Activated CD4-positive, alpha-beta T cell treated with anti-CD3 and anti-CD28 coated beads for 36 hours (primary cell): ENCODE measurements at regions of chr18 and their contacts with region 1.

Region 1: DNA sequence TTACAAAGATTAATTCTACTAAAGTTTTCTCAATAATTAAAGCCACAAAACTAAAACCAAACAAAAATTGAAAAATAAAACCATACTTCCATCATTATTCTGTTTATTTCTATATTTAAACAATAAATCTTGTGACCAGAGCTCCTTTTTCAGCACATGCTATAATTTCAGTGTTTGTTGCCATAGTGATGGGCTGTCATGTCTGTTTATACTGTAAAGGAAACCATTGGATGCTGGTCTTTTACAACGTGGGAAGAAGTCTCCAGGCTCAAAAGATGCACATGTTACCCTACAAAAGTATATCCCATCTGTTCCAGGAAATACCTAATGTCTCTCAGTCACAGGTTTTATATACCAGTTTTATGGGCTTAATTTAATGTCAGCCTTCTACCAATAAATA is 100.1 kb upstream of the MC2R start:
- DNase-seq: no peak
- ATAC-seq: no peak
- H3K4me3 Mint-ChIP-seq: no peak overlapping the region
- H3K27ac Mint-ChIP-seq: no peak overlapping the region
- H3K4me1 Mint-ChIP-seq: no peaks in the 10 kb centered on the region
- H3K27me3 Mint-ChIP-seq: peaks cover 6% of the 10 kb centered on the region

Region 2: DNA sequence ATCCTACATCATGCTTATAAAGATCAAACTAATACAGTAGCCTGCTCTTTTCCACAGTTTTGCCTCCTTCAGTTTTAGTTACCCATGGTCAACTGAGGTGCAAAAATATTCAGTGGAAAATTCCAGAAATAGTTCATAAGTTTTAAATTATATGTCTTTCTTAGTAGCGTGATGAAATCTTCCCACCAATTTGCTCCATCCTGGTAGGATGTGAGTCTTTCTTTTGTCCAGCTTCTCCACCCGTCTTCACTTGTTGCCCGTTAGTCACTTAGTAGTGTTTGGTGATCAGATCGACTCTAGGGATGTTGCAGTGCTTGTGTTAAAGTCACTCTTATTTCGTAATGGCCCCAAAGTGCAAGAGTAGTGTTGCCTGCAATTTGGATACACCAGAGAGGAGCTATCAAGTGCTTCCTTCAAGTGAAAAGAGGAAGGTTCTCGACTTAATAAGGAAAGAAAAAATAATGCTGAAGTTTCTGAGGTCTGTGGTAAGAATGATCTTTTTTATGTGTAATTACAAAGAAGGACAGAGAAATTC is 967.3 kb before region 1 on chr18:
- CTCF ChIA-PET with region 1: no interaction called
- POLR2A ChIA-PET with region 1: no interaction called
- intact Hi-C with region 1: no loop called
- DNase-seq: no peak
- ATAC-seq: no peak
- H3K4me3 Mint-ChIP-seq: no peak overlapping the region
- H3K27ac Mint-ChIP-seq: peak overlapping the region; percentile 11
- H3K4me1 Mint-ChIP-seq: peaks cover 27% of the 10 kb centered on the region
- H3K27me3 Mint-ChIP-seq: no peaks in the 10 kb centered on the region

Region 3: GRCh38 chr18:13945811-13946210 is 69.6 kb before region 1 on chr18:
- CTCF ChIA-PET with region 1: no interaction called
- POLR2A ChIA-PET with region 1: no interaction called
- intact Hi-C with region 1: no loop called
- DNase-seq: no peak
- ATAC-seq: no peak
- H3K4me3 Mint-ChIP-seq: no peak overlapping the region
- H3K27ac Mint-ChIP-seq: no peak overlapping the region
- H3K4me1 Mint-ChIP-seq: no peaks in the 10 kb centered on the region
- H3K27me3 Mint-ChIP-seq: peaks cover 4% of the 10 kb centered on the region

Region 4: GRCh38 chr18:14031053-14031452 is 15.6 kb after region 1 on chr18:
- CTCF ChIA-PET with region 1: no interaction called
- POLR2A ChIA-PET with region 1: no interaction called
- intact Hi-C with region 1: loop called in 1 of 2 experiments (anchors 2 kb)
- DNase-seq: no peak
- ATAC-seq: no peak
- H3K4me3 Mint-ChIP-seq: no peak overlapping the region
- H3K27ac Mint-ChIP-seq: no peak overlapping the region
- H3K4me1 Mint-ChIP-seq: no peaks in the 10 kb centered on the region
- H3K27me3 Mint-ChIP-seq: peaks cover 9% of the 10 kb centered on the region